ENCODE measurements at regions of chr18 and their contacts with region 1.

Region 1: GRCh38 chr18:59068276-59069071 is 71.2 kb upstream of the SEC11C start:
- DNase-seq: no peak
- H3K4me3 ChIP-seq: no peak overlapping the region
- H3K27ac ChIP-seq: no peak overlapping the region
- H3K4me1 ChIP-seq: peaks cover 0 to 5% (median 2%) of the 10 kb centered on the region in 4 donors
- H3K27me3 ChIP-seq: no peaks in the 10 kb centered on the region
- CTCF ChIP-seq: no peak
- EP300 ChIP-seq: no peak
- POLR2A ChIP-seq: no peak

Region 2: GRCh38 chr18:58781627-58782194 is 286.8 kb before region 1 on chr18:
- intact Hi-C with region 1: loop called (anchors 1 kb)
- DNase-seq: peak; percentile 93
- H3K4me3 ChIP-seq: no peak overlapping the region
- H3K27ac ChIP-seq: no peak overlapping the region
- H3K4me1 ChIP-seq: peaks cover 10 to 17% (median 13%) of the 10 kb centered on the region in 4 donors
- H3K27me3 ChIP-seq: no peaks in the 10 kb centered on the region
- CTCF ChIP-seq: peak; percentile 83 to 95 (median 87)
- EP300 ChIP-seq: no peak
- POLR2A ChIP-seq: no peak